Activated T-helper 2 cell treated with anti-CD3 and anti-CD28 coated beads, Interferon-gamma antibody, Interleukin-2, Interleukin-4, amounts not matched to agents 10 μg/mL and 5 μg/mL and 100 μg/mL, durations not matched to agents 14 hours and 24 hours and 36 hours (primary cell): ENCODE measurements at regions of chr2 and their contacts with region 1.

Region 1: DNA sequence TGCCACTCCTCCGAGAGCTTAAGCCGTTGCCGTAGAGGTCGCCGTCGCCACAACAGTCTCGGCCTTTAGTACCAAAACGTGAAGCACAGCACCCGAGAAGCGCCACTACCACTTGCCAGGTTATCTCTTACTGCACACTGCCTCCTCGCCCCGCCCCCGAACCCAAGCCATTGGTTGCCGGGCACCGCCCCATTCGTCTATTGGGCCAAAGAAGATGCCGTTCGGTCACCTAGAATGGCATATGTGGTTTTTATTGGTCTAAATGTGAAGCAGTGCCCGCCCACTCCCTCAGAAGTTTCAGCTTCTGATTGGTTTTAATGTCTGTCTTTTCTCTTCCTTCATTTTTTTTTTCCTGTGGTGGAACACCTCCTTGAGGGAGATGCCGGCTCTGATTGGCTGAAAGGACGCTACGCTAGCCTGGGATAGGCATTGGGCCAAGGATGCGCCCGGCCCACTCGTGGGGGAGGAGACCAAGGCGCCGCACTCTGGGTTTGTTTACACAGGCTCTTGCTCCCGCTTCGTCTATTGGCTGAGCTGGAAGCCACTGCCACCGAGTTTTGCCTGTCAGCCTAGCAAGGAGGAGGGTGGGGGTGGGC is at the start of gene PAIP2B:
- DNase-seq: peak; percentile 97
- H3K4me3 Mint-ChIP-seq: peak within 1 kb of the TSS; percentile 95
- H3K27ac Mint-ChIP-seq: peak within 1 kb of the TSS; percentile 83
- H3K4me1 Mint-ChIP-seq: peaks cover 15% of the 10 kb centered on the region
- H3K27me3 Mint-ChIP-seq: peaks cover 9% of the 10 kb centered on the region
- total RNA-seq, gene PAIP2B: 0.84 and 0.94 TPM in 2 replicates

Region 2: GRCh38 chr2:70994756-70995729 is 232.0 kb before region 1 on chr2 and contains the start of gene TEX261:
- intact Hi-C with region 1: loop called (anchors 10 kb)
- DNase-seq: peak; percentile 89
- H3K4me3 Mint-ChIP-seq: peak within 1 kb of the TSS; percentile 97
- H3K27ac Mint-ChIP-seq: peak within 1 kb of the TSS; percentile 95
- H3K4me1 Mint-ChIP-seq: peaks cover 31% of the 10 kb centered on the region
- H3K27me3 Mint-ChIP-seq: no peaks in the 10 kb centered on the region
- total RNA-seq, gene TEX261: 67.9 and 68.8 TPM in 2 replicates

Region 3: GRCh38 chr2:71068218-71069035 is 158.6 kb before region 1 on chr2 and contains the start of gene NAGK:
- intact Hi-C with region 1: loop called (anchors 1 kb)
- DNase-seq: peak; percentile 97
- H3K4me3 Mint-ChIP-seq: peak within 1 kb of the TSS; percentile 95
- H3K27ac Mint-ChIP-seq: peak within 1 kb of the TSS; percentile 94
- H3K4me1 Mint-ChIP-seq: peaks cover 44% of the 10 kb centered on the region
- H3K27me3 Mint-ChIP-seq: peaks cover 1% of the 10 kb centered on the region
- total RNA-seq, gene NAGK: 59.3 and 62.4 TPM in 2 replicates

Region 4: DNA sequence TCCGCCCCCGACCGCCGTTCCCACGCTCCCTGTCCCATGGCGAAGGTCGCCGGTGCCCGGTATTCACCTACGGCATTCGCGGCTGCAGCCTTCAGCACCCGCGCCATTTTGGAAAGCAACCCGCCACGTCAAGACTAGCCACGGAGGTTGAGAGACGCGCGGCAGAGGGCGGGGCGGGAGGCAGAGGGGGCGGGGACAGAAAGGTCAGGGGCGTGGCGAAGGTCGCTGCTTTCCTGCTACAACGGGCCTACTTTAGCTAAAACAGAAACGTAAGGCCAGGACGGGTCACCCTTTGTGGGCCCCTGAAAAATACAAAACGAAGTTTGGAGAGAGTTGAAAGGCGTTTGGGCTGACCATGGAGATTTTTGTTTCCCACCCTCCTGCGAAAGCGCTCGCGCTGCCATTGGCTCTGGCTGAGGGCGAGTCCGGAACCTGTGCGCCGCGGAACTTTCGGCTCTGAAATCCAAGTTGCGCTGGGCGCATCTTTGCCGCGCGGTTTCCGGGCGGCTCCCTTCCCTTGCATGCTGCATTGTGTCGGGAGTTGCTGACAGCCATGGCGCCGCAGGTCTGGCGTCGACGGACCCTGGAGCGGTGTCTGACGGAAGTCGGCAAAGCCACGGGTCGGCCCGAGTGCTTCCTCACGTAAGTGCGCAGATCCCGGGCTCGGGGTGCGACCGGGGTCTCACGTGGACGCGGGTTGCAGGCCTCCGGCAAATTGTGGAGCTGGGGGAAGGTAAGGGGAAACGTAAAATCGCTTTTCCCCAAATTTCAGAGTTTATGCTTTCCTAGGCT is 96.8 kb before region 1 on chr2 and contains the starts of genes MCEE and MPHOSPH10:
- intact Hi-C with region 1: loop called (anchors 1 kb)
- DNase-seq: peak; percentile 87
- H3K4me3 Mint-ChIP-seq: no peak within 1 kb of the TSS
- H3K27ac Mint-ChIP-seq: no peak within 1 kb of the TSS
- H3K4me1 Mint-ChIP-seq: peaks cover 13% of the 10 kb centered on the region
- H3K27me3 Mint-ChIP-seq: no peaks in the 10 kb centered on the region
- total RNA-seq, gene MCEE: 12.8 and 14.3 TPM in 2 replicates
- total RNA-seq, gene MPHOSPH10: 52.3 and 54.3 TPM in 2 replicates

Region 5: GRCh38 chr2:71276311-71277146 is 49.5 kb after region 1 on chr2:
- intact Hi-C with region 1: loop called (anchors 1 kb)
- DNase-seq: peak; percentile 85
- H3K4me3 Mint-ChIP-seq: peak overlapping the region; percentile 72
- H3K27ac Mint-ChIP-seq: no peak overlapping the region
- H3K4me1 Mint-ChIP-seq: peaks cover 9% of the 10 kb centered on the region
- H3K27me3 Mint-ChIP-seq: peaks cover 76% of the 10 kb centered on the region

Region 6: DNA sequence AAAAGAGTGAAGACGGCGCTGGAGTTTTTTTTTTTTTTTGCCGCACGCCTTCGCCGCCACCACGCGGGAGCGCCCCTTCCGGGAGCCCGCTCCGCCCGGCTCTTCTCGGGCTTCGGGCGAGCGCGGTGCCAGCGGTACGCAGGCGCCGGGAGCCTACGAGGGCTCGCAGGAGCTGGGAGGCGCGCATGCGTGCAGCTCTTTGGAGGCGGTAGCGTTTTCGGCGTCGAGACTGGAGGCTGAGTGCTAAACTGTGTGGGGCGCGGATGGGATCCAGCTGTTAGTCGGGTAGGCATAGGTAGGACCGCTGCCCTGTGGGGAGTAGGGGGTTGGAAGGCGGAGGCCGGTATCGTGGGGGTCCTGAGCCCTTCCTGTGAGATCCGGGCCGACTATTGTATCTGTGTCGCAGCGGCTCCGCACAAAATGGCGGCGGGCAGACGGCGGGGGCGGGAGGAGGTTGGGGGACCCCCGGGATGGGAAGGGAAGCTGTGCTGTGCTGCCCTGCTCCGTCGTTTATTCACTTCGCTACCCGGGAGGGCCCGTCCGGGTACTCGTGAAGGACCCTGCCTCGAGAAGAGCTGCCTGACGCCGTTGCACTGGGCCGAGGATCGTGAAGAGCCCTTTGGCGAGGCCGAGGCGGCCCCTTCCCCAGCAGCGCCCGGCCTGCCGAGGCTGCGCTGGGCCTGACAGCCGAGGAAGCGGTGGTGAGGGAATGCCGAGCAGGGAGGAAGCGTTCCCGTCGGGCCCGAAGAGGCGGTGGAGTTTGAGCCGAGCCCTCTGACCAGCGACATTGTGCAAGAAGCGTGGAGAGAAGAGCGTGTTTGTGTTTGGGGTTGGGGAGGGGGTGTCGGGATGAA is 104.7 kb after region 1 on chr2 and contains the start of gene ZNF638:
- intact Hi-C with region 1: loop called (anchors 1 kb)
- DNase-seq: peak; percentile 89
- H3K4me3 Mint-ChIP-seq: peak within 1 kb of the TSS; percentile 99
- H3K27ac Mint-ChIP-seq: peak within 1 kb of the TSS; percentile 100
- H3K4me1 Mint-ChIP-seq: peaks cover 17% of the 10 kb centered on the region
- H3K27me3 Mint-ChIP-seq: peaks cover 11% of the 10 kb centered on the region
- total RNA-seq, gene ZNF638: 96.5 and 97.6 TPM in 2 replicates

Region 7: GRCh38 chr2:71452565-71452964 is 225.5 kb after region 1 on chr2:
- intact Hi-C with region 1: loop called (anchors 5 kb)
- DNase-seq: no peak
- H3K4me3 Mint-ChIP-seq: no peak overlapping the region
- H3K27ac Mint-ChIP-seq: no peak overlapping the region
- H3K4me1 Mint-ChIP-seq: peaks cover 9% of the 10 kb centered on the region
- H3K27me3 Mint-ChIP-seq: peaks cover 52% of the 10 kb centered on the region

Region 8: DNA sequence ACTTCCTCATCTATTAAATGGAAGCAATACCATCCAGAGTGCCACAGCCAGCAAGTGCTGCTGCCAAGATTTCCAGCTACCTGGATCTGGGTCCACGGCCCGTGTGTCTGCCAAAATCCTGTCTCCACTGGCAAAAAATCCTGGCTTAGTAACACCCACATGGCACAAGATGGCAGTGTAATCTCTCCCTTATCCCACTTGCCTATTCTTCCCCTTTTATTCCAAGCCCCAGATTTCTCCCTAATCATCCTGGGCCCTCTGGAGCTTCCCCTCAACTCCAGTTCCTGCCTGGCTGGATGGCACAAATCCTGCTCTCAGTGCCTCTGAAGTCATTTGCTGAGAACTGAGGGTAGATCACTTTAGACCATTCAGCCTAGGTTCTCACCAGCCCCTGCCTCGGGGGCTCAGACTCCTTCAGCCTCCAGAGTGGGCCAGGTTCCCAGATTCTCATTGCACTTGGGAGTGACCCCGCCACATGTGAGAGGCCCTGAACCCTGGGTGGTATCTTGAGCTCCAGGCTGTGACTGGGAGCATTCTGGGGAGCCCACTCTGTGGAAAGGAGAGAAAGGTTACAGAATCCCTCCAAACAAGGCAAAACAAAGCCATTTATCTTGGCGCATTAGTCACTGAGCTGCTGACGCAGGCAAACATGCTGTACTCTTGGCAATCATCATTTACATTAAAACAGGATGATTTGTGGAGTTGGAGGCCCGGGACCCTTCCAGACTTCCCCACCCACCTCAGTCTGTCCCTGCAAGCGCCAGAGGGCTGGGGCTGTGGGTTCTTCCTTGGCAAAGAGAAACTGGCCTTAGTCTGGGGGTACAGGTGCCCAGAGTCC is 552.1 kb after region 1 on chr2:
- intact Hi-C with region 1: no loop called
- DNase-seq: no peak
- H3K4me3 Mint-ChIP-seq: no peak overlapping the region
- H3K27ac Mint-ChIP-seq: no peak overlapping the region
- H3K4me1 Mint-ChIP-seq: no peaks in the 10 kb centered on the region
- H3K27me3 Mint-ChIP-seq: no peaks in the 10 kb centered on the region